Activated T-helper 1 cell treated with anti-CD3 and anti-CD28 coated beads, Interleukin-12 subunit alpha, Interleukin-12 subunit beta, Interleukin-2, Interleukin-4 antibody, amounts not matched to agents 30 ng/mL and 10 ng/mL and 1 ng/mL, durations not matched to agents 14 hours and 24 hours and 36 hours (primary cell): ENCODE measurements at regions of chr1 and their contacts with region 1.

Region 1: GRCh38 chr1:222713091-222713961 is 962 bp downstream of the BROX start:
- DNase-seq: peak; percentile 85
- H3K4me3 Mint-ChIP-seq: peak overlapping the region; percentile 94
- H3K27ac Mint-ChIP-seq: peak overlapping the region; percentile 99
- H3K4me1 Mint-ChIP-seq: peaks cover 57% of the 10 kb centered on the region
- H3K27me3 Mint-ChIP-seq: no peaks in the 10 kb centered on the region

Region 2: GRCh38 chr1:222589462-222590302 is 123.6 kb before region 1 on chr1 and contains the start of gene TAF1A:
- intact Hi-C with region 1: loop called (anchors 2 kb)
- DNase-seq: peak; percentile 77
- H3K4me3 Mint-ChIP-seq: peak within 1 kb of the TSS; percentile 92
- H3K27ac Mint-ChIP-seq: peak within 1 kb of the TSS; percentile 88
- H3K4me1 Mint-ChIP-seq: peaks cover 37% of the 10 kb centered on the region
- H3K27me3 Mint-ChIP-seq: peaks cover 6% of the 10 kb centered on the region
- total RNA-seq, gene TAF1A: 19.2 and 19.7 TPM in 2 replicates

Region 3: GRCh38 chr1:222643938-222644635 is 69.2 kb before region 1 on chr1:
- intact Hi-C with region 1: loop called (anchors 1 kb)
- DNase-seq: peak; percentile 98
- H3K4me3 Mint-ChIP-seq: peak overlapping the region; percentile 99
- H3K27ac Mint-ChIP-seq: peak overlapping the region; percentile 97
- H3K4me1 Mint-ChIP-seq: peaks cover 33% of the 10 kb centered on the region
- H3K27me3 Mint-ChIP-seq: no peaks in the 10 kb centered on the region

Region 4: DNA sequence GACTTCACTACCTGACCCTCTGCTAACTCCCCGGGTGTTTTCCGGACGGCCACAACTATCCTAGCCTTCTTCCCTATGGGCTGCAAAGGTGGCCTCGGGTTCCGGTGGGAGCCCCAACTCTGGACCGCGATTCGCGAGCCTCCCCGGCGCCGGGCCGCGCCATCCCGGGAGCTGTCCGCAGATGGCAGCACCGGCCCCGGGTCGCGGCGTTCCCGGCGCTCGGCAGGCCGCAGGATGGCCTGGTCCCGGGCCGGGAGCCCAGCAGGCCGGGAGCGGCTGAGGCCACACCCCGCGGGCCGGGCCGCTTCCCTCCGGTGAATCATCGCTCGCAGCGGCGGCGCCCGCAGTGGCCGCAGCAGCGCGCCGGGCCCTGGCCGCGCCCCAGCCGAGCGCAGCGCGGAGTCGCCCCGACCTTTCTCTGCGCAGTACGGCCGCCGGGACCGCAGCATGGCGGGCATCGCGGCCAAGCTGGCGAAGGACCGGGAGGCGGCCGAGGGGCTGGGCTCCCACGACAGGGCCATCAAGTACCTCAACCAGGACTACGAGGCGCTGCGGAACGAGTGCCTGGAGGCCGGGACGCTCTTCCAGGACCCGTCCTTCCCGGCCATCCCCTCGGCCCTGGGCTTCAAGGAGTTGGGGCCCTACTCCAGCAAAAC is 999.0 kb after region 1 on chr1 and contains the start of gene CAPN2:
- intact Hi-C with region 1: loop called (anchors 10 kb)
- DNase-seq: peak; percentile 58
- H3K4me3 Mint-ChIP-seq: peak within 1 kb of the TSS; percentile 80
- H3K27ac Mint-ChIP-seq: peak within 1 kb of the TSS; percentile 88
- H3K4me1 Mint-ChIP-seq: peaks cover 62% of the 10 kb centered on the region
- H3K27me3 Mint-ChIP-seq: peaks cover 2% of the 10 kb centered on the region
- total RNA-seq, gene CAPN2: 66.3 and 70.4 TPM in 2 replicates

Region 5: DNA sequence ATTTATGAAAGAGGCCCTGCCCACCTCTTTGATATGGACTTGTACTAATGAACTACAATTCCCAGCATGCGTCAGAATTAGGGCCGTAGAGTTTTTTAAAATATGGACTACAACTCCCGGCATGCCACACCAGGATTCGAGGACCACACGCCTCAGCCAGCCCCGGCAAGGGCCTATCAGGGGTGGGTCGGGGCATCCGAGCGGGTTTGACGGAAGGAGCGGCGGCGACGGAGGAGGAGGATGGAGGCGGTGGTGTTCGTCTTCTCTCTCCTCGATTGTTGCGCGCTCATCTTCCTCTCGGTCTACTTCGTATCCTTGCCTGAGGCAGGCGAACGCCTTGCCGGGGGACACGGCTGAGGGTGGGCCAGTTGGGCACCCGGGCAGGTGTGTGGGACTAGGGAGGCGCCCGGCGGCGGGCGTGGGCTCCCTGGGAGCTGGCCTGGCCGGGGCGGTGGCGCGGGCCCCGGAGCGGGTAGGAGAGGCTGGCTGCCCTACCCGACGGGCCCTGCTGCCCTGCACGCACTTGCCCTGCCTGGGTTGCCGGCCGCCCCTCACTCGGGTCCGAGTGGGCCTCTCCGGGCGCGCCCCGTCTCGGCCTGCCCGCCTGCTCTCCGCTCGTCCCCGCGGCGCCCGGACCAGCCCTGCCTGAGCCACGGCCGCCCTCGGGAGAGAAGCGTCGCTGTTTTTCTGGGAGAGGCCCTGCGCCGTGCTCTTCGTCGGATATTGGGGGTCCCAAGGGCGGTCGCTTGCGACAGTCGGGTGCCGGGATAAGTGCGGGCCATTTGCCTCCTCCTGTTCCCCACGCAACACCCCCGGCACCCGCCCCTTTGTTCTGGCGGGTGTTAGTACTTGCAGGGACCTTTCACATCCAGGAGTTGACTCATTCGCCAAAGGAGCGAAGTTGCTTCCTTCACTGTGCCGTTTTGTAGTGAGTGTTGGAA is 1643.6 kb after region 1 on chr1 and contains the start of gene CNIH4:
- intact Hi-C with region 1: loop called (anchors 5 kb)
- DNase-seq: peak; percentile 89
- H3K4me3 Mint-ChIP-seq: peak within 1 kb of the TSS; percentile 93
- H3K27ac Mint-ChIP-seq: peak within 1 kb of the TSS; percentile 93
- H3K4me1 Mint-ChIP-seq: peaks cover 28% of the 10 kb centered on the region
- H3K27me3 Mint-ChIP-seq: no peaks in the 10 kb centered on the region
- total RNA-seq, gene CNIH4: 80.7 and 82.3 TPM in 2 replicates